Activated naive CD4-positive, alpha-beta T cell treated with anti-CD3 and anti-CD28 coated beads for 36 hours (primary cell): ENCODE measurements at regions of chr11 and their contacts with region 1.

Region 1: DNA sequence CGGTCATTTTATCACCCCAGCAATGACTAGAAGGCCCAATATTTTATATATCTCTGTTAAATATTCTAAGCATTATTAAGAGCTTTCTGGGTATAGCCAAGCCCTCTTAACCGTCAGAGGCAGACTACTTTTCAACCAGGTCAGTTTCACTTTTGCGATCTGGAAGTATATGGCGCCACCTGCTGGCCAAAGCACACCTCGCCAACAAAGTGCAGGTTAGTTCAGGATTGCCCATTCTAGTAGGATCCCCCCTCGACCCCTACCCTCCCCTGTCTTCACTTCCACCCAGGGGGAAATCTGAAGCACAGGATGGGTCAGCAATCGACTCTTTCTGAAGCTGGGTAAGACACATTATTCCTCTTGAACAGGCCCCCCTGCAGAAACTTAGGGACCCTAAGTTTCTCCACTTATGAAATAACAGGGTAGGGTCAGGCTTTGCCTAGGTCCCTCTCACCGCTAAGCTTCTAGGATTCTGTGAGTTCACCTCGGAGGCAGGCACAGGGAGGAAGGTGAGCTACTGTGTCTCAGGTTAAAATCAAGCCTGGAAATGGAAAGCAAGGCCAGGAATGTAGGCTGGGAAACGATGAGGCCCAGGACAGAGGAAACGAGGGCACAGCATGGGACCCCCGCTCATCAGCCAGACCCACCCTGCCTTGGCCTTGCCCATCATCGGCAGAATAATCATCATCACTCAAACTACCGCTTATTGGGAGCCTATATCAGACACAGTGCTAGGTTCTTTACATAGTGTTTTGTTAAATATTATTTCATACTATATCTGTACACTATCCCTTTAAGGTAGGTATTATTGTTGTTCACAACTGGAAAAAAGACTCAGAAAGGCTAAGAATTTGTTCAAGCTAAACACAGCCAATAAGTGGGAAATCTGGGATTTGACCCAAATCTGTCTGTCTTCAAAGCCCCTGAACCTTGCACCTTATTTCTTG is 35.6 kb downstream of the KCNJ1 start:
- DNase-seq: peak; percentile 96
- H3K4me3 Mint-ChIP-seq: peak overlapping the region; percentile 8
- H3K27ac Mint-ChIP-seq: peak overlapping the region; percentile 85
- H3K4me1 Mint-ChIP-seq: peaks cover 17% of the 10 kb centered on the region
- H3K27me3 Mint-ChIP-seq: no peaks in the 10 kb centered on the region

Region 2: GRCh38 chr11:128026596-128026995 is 804.9 kb before region 1 on chr11:
- CTCF ChIA-PET with region 1: interaction called, 5 read pairs
- intact Hi-C with region 1: loop called (anchors 1 kb)
- DNase-seq: no peak
- H3K4me3 Mint-ChIP-seq: no peak overlapping the region
- H3K27ac Mint-ChIP-seq: no peak overlapping the region
- H3K4me1 Mint-ChIP-seq: peaks cover 4% of the 10 kb centered on the region
- H3K27me3 Mint-ChIP-seq: no peaks in the 10 kb centered on the region

Region 3: DNA sequence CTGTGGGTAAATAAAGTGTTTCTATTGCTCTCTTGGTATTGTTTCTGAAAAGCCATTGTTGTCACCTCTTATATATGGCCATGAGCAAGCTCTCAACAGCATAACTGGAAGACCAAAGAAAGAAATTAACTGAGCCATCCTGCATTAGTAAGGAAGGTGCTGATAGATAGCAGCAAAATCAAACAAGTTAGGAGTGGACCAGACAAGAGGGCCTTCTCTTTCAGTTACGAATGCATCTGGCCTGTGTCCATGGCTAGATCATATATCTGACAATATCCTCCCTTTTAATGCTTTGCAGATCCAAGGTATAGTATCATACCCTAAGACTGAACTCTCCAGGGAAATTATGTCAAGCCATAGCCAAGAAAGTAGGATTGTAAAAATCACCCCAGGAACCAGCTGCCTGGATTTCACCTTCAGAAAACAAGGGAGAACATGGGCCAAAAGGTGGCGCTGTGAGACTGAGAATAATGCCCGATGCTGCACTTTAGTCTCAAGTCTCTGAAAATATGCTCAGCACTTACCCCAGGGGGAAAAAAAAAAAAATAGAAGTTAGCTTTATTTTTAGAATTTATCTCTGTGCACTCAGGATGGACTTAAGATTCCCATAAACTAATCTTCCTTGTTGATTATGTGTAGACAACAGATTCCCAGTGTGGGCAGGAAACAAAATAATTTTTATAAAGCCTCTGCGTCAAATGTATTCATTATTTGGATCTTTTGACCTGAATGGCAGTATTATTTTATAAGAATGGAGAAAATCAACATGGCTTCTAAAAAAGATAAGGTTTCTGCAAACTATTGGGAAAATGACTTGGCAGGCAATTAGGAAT is 659.2 kb before region 1 on chr11:
- CTCF ChIA-PET with region 1: interaction called, 27 read pairs
- intact Hi-C with region 1: loop called (anchors 1 kb)
- DNase-seq: peak; percentile 96
- H3K4me3 Mint-ChIP-seq: no peak overlapping the region
- H3K27ac Mint-ChIP-seq: no peak overlapping the region
- H3K4me1 Mint-ChIP-seq: peaks cover 7% of the 10 kb centered on the region
- H3K27me3 Mint-ChIP-seq: no peaks in the 10 kb centered on the region

Region 4: DNA sequence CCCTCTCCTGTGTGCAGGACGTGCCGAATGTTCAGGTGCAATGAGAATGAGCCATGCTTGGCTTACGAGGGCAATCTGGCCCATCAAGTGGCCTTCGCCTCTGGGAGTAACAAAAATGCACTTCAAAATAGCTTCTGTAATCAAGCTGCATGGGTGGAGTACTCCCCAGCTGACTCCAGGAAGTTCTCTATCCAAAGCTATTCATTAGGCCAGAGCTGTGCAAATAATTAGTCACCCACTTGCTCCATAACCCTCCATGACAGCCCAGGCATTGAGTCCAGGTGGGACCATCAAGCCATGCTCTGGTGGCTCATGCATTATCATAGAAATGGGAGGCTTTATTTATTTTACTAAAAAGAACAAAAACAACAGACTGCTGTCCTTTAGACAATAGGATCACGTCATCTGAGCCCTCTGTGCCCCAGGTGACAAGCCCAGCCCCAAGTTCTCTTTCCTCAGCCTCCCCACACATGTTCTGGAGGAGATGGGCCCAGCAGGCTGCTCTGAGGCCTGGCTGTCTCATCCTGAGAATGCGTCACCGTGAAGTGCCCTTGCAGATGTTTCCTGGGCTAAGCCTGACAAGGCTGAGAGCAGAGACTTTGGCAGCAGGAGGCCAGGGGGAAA is 488.8 kb before region 1 on chr11:
- CTCF ChIA-PET with region 1: no interaction called
- intact Hi-C with region 1: loop called (anchors 1 kb)
- DNase-seq: peak; percentile 93
- H3K4me3 Mint-ChIP-seq: peak overlapping the region; percentile 73
- H3K27ac Mint-ChIP-seq: peak overlapping the region; percentile 89
- H3K4me1 Mint-ChIP-seq: peaks cover 93% of the 10 kb centered on the region
- H3K27me3 Mint-ChIP-seq: no peaks in the 10 kb centered on the region

Region 5: DNA sequence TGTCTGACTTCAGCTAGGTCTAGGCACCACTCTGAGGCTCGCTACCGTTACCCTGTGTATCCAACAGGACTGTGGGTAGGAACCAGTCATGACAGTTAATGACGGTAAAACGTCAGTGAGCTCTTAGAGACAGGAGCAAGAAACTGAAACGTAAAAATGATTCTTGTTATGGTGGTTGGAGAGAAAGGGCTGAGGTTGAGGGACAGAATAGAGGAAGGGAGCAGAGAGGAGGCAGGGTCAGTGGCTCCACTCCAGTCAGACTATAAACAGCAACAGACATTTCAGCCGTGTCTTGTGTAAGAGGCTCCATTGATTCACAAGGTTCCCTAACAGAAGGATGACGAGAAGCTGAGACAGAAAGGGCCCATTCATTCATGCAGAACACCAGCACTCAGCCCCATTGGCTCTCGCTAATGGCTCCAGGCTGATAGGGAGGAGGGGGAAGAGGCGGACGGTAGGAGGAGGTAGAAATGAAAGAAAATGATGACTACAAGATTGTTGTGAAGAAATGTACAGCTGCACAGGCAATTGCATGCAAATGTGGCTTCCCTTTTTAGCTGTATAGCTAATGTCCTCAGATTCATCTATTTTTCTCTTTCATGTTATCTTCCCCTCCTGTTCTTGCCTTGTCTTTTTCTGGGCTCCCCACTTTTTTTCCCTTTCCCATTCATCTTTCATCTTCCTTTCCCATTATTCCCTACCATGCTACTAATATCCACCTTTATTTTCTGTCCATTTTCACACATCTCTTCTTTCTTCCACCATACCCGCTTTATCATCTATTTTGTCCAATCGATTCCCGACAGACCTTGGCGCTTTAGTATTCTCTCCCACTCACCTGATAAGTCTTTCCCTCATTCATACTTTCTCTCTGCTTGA is 278.4 kb before region 1 on chr11:
- CTCF ChIA-PET with region 1: interaction called, 4 read pairs
- intact Hi-C with region 1: loop called (anchors 2 kb)
- DNase-seq: peak; percentile 68
- H3K4me3 Mint-ChIP-seq: peak overlapping the region; percentile 19
- H3K27ac Mint-ChIP-seq: peak overlapping the region; percentile 95
- H3K4me1 Mint-ChIP-seq: peaks cover 59% of the 10 kb centered on the region
- H3K27me3 Mint-ChIP-seq: no peaks in the 10 kb centered on the region

Region 6: GRCh38 chr11:128776424-128777284 is 54.8 kb before region 1 on chr11:
- CTCF ChIA-PET with region 1: interaction called, 14 read pairs
- intact Hi-C with region 1: no loop called
- DNase-seq: peak; percentile 35
- H3K4me3 Mint-ChIP-seq: no peak overlapping the region
- H3K27ac Mint-ChIP-seq: no peak overlapping the region
- H3K4me1 Mint-ChIP-seq: peaks cover 44% of the 10 kb centered on the region
- H3K27me3 Mint-ChIP-seq: no peaks in the 10 kb centered on the region

Region 7: DNA sequence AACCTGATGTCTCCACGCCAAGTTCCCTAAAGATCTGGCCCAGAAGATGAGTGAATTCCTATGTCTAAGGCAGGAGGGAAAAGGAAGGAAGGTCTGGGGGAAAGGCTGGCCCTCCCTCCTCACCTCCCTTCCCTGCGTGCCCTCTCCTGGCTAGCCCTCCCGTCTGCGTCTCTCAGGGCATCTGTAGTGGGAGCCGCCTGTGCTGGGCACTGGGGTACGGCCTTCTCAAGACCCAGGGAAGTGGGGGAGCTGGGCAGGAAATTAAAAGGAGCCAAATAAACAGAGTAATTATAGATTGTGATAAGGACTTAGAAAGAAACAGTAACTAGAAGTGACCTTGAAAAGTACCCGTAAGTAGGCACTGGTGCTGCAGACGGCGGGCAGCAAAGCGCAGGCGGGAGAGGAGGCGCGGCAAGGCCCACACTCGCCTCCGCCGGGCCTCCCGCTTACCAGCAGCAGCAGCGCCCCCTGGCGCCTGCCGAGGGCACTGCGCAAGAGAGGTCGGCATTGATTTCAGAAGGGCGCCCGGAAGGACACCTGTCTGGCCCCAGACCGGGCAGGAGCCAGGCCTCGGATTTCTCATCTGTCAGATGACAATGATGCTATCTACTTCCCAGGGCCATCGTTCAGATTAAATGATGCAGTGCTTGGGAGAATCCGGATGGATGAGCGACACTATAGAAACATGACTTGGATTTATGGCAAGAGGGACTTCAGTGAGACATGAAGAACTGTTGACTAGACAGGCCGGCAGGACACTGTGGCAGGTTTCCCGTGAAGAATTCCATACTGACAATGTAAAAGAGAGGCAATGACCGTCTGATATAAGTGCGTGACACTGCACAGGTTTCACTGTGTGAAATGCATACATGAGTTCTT is 28.4 kb after region 1 on chr11:
- CTCF ChIA-PET with region 1: interaction called, 3 read pairs
- intact Hi-C with region 1: loop called (anchors 1 kb)
- DNase-seq: peak; percentile 85
- H3K4me3 Mint-ChIP-seq: no peak overlapping the region
- H3K27ac Mint-ChIP-seq: no peak overlapping the region
- H3K4me1 Mint-ChIP-seq: peaks cover 3% of the 10 kb centered on the region
- H3K27me3 Mint-ChIP-seq: no peaks in the 10 kb centered on the region